GM13976 (cell line): ENCODE measurements at regions of chr17 and their contacts with region 1.

Region 1: GRCh38 chr17:48724251-48725003 is 1.4 kb downstream of the PRAC2 start:
- DNase-seq: peak; percentile 80
- CTCF ChIP-seq: peak; percentile 76

Region 2: DNA sequence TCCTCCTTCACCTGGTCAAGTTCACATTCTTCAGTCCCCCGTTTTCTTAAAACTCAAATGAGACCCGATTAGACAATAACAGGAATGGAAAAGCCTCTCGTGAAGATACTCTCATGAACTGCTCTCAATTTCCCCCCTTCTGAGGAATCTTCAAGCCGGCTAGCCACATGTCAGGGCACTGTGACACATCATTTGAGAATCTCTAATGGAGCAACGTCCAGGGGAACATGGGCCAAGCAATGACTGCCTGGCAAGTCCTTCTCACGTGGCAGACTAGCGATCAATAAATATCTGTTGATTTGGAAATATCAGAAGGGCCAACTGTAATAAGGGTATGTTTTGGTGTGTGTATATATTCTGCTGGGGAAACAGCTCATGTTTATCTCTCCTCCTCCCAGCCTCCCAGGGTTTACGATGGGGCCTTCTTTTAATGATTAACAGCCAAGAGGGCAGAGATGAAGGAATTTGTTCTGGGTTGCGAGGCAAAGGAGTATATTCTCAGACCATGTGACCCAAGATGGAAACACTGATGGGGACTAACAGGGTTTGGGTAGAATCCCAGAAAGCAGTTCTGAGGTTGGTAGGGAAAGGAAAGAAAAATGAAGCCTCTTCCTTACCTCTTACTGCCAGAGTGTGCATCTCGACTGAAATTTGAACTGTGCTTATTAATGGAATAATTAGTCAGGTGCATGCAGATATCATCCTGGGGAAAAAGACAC is 71.2 kb after region 1 on chr17:
- in situ Hi-C with region 1: loop called (anchors 5 kb)
- DNase-seq: no peak
- CTCF ChIP-seq: no peak